ENCODE measurements at regions of chr9 and their contacts with region 1.

Region 1: GRCh38 chr9:8880060-8880459 is 1080.5 kb upstream of the DMAC1 start:
- DNase-seq: no peak
- H3K4me3 ChIP-seq: no peak overlapping the region
- H3K27ac ChIP-seq: no peak overlapping the region
- H3K4me1 ChIP-seq: no peaks in the 10 kb centered on the region
- H3K27me3 ChIP-seq: no peaks in the 10 kb centered on the region
- CTCF ChIP-seq: no peak

Region 2: GRCh38 chr9:8579661-8580060 is 300.4 kb before region 1 on chr9:
- intact Hi-C with region 1: loop called (anchors 10 kb)
- DNase-seq: no peak
- H3K4me3 ChIP-seq: no peak overlapping the region
- H3K27ac ChIP-seq: no peak overlapping the region
- H3K4me1 ChIP-seq: no peaks in the 10 kb centered on the region
- H3K27me3 ChIP-seq: no peaks in the 10 kb centered on the region
- CTCF ChIP-seq: no peak

Region 3: DNA sequence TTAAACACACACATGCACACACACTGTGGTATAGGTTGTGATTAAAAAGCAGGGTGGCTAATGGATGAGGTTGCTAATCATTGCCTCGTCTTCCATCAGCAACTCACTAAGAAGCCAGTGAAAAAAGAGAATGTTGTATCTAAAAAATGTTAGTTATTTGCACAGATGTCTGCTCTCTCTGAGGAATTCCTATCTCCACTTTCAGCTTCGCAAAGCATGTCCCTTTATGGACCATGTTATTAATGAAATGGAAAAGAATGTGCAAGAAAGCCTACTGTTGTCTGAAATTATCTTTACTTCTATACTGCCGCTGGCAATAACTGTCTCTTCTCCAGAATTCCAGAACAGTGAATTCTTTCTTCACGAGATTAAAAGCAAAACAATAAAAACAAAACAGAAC is 568.7 kb after region 1 on chr9:
- intact Hi-C with region 1: no loop called
- DNase-seq: no peak
- H3K4me3 ChIP-seq: no peak overlapping the region
- H3K27ac ChIP-seq: no peak overlapping the region
- H3K4me1 ChIP-seq: no peaks in the 10 kb centered on the region
- H3K27me3 ChIP-seq: no peaks in the 10 kb centered on the region
- CTCF ChIP-seq: no peak